ENCODE measurements at regions of chr16 and their contacts with region 1.

Region 1: GRCh38 chr16:56608043-56608875 is at the start of gene MT2A:
- DNase-seq: peak; percentile 94 to 96
- ATAC-seq: peak; percentile 78 to 89 (median 87)
- H3K4me3 ChIP-seq: peak within 1 kb of the TSS; percentile 52 to 78 (median 72)
- H3K27ac ChIP-seq: peak within 1 kb of the TSS; percentile 84 to 99 (median 93)
- H3K4me1 ChIP-seq: peaks cover 25 to 68% (median 60%) of the 10 kb centered on the region in 9 donors
- H3K27me3 ChIP-seq: no peaks in the 10 kb centered on the region
- CTCF ChIP-seq: peak in 1 of 9 donors; percentile 6
- total RNA-seq, gene MT2A: 88.8 to 354 (median 109) TPM

Region 2: DNA sequence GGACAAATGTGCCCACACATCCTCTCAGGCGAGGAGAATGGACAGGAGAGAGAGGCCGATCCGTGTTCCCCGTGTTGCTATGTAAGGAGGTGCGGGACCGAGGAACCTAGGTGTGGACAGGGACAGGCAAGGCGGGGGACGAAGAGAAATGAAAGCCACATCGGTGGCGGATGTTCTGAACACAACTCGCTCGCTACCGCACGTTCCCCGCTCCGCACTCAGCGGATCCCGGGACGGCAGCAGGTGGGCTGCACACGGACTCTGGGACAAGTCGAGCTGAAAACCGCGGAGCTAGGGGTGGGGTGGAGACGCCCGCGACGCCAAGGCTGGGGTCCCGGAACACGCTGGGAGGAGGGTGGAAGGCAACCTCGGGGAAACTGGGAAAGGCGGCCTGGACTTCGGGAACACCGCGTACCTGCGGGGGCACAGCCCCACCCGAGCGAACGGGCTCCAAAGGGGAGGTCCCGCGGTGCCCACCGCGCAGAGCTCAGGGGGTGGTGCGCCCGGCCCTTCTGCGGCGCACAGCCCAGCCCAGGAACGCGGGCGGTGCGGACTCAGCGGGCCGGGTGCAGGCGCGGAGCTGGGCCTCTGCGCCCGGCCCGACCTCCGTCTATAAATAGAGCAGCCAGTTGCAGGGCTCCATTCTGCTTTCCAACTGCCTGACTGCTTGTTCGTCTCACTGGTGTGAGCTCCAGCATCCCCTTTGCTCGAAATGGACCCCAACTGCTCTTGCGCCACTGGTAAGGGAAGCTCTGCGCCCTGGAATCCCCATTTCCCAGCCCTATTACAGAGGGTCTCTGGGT is 17.1 kb after region 1 on chr16 and contains the start of gene MT1E:
- intact Hi-C with region 1: loop called in 4 of 10 experiments (anchors 1 to 2 kb)
- DNase-seq: peak; percentile 85 to 86
- ATAC-seq: peak; percentile 92 to 96 (median 94)
- H3K4me3 ChIP-seq: peak within 1 kb of the TSS; percentile 26 to 82 (median 67)
- H3K27ac ChIP-seq: peak within 1 kb of the TSS; percentile 76 to 98 (median 93)
- H3K4me1 ChIP-seq: peaks cover 0 to 29% (median 14%) of the 10 kb centered on the region in 9 donors
- H3K27me3 ChIP-seq: peaks cover 0 to 4% (median 0%) of the 10 kb centered on the region in 7 donors
- CTCF ChIP-seq: peak in 1 of 9 donors; percentile 2
- total RNA-seq, gene MT1E: 83.3 to 164 (median 97.0) TPM

Region 3: DNA sequence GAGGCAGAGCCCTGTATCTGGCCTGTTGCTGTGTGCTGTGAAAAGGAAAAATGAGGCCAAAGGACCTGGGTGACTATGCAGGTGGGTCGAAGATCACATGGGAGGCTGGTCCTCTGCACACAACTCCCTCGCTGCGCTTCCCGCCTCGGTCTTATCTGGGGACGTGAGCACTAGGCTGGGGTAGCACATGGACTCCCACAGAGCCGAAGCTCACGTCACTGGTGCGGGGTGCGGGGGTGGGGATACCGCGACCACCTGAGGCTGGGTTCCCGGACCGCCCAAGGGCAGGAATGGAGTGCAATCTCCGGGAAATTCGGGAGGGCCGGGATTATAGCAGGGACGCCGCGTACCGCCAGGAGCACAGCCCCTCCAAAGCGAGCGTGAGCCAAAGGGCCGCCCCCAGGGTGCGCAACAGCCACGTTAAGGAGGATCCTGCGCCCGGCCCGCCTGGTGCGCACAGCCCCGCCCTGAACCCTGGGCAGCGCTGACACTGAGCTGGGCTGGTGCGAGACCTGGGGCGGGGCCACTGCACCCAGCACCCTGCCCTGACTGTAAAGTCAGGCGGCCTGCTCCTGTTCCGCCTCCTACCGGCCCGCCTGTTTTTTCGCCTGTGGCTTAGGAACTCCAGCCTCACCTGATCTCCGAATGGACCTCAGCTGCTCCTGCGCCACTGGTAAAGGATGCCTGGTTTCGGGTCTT is 35.0 kb after region 1 on chr16:
- intact Hi-C with region 1: loop called in 5 of 10 experiments (anchors 5 kb)
- DNase-seq: peak; percentile 42 to 77
- ATAC-seq: peak; percentile 85 to 94 (median 92)
- H3K4me3 ChIP-seq: peak overlapping the region in 9 of 10 donors; percentile 11 to 49 (median 41)
- H3K27ac ChIP-seq: peak overlapping the region in 5 of 10 donors; percentile 0 to 42 (median 23)
- H3K4me1 ChIP-seq: peaks cover 0 to 31% (median 20%) of the 10 kb centered on the region in 9 donors
- H3K27me3 ChIP-seq: peaks cover 0 to 95% (median 46%) of the 10 kb centered on the region in 7 donors
- CTCF ChIP-seq: peak in 8 of 9 donors; percentile 6 to 60 (median 46)

Region 4: GRCh38 chr16:56681939-56682702 is 73.9 kb after region 1 on chr16 and contains the start of gene MT1X:
- intact Hi-C with region 1: loop called in 8 of 10 experiments (anchors 1 to 5 kb)
- DNase-seq: peak; percentile 88 to 95
- ATAC-seq: peak; percentile 93 to 99 (median 98)
- H3K4me3 ChIP-seq: peak within 1 kb of the TSS; percentile 37 to 71 (median 58)
- H3K27ac ChIP-seq: peak within 1 kb of the TSS; percentile 60 to 90 (median 82)
- H3K4me1 ChIP-seq: peaks cover 0 to 55% (median 28%) of the 10 kb centered on the region in 9 donors
- H3K27me3 ChIP-seq: peaks cover 0 to under 1% (median 0%) of the 10 kb centered on the region in 7 donors
- CTCF ChIP-seq: no peak
- total RNA-seq, gene MT1X: 15.8 to 616 (median 71.4) TPM

Region 5: DNA sequence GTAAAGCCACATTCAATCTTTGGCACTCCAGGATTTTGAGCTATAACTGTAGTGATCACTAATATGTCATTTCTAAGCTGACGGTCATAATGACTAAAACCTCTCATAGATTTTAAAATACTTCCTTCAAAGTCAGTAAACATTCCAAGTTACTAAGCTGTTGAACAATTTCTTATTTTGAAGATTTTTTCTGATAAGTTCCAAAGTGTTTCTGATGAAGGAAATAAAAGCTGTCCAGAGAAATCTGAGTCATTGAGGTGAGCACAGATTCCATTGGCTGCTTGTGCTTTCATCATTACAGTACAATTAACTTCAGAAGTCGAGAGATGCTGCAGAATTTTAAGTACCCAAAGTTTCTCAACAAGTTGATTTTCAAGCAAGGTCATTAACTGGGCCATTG is 405.0 kb after region 1 on chr16:
- intact Hi-C with region 1: no loop called
- DNase-seq: no peak
- ATAC-seq: no peak
- H3K4me3 ChIP-seq: no peak overlapping the region
- H3K27ac ChIP-seq: peak overlapping the region in 7 of 10 donors; percentile 23 to 84 (median 73)
- H3K4me1 ChIP-seq: peaks cover 0 to 46% (median 4%) of the 10 kb centered on the region in 9 donors
- H3K27me3 ChIP-seq: no peaks in the 10 kb centered on the region
- CTCF ChIP-seq: no peak